Right cardiac atrium (tissue), 5 donors: ENCODE measurements at regions of chr12 and their contacts with region 1.

Region 1: GRCh38 chr12:103947871-103948555 is 17.7 kb upstream of the TDG start:
- DNase-seq: no peak
- ATAC-seq: no peak
- H3K4me3 ChIP-seq: no peak overlapping the region
- H3K27ac ChIP-seq: no peak overlapping the region
- H3K4me1 ChIP-seq: no peaks in the 10 kb centered on the region
- H3K27me3 ChIP-seq: no peaks in the 10 kb centered on the region

Region 2: DNA sequence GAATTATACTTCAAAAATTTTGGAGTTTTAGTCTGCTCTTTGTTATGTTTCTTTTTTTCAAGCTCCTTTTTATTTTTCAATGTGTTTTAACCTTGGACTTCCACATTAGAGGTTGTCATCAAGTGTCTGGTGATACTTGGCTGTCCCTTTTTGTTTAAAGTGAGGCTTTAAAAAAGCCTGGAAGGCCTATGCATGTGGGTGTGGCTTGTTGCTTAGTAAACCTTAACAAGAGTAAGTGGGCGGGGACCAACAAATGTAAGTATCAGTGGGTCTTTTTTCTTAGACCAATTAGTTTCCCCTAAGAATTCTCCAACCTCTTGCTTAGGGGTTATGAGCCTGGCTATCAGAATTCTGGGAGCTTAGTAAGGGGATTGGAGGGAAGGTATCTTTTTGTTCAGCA is 142.7 kb after region 1 on chr12:
- intact Hi-C with region 1: loop called in 1 of 4 experiments (anchors 10 kb)
- DNase-seq: no peak
- ATAC-seq: no peak
- H3K4me3 ChIP-seq: no peak overlapping the region
- H3K27ac ChIP-seq: no peak overlapping the region
- H3K4me1 ChIP-seq: no peaks in the 10 kb centered on the region
- H3K27me3 ChIP-seq: no peaks in the 10 kb centered on the region